Caco-2 (cell line): ENCODE measurements at regions of chr6 and their contacts with region 1.

Region 1: DNA sequence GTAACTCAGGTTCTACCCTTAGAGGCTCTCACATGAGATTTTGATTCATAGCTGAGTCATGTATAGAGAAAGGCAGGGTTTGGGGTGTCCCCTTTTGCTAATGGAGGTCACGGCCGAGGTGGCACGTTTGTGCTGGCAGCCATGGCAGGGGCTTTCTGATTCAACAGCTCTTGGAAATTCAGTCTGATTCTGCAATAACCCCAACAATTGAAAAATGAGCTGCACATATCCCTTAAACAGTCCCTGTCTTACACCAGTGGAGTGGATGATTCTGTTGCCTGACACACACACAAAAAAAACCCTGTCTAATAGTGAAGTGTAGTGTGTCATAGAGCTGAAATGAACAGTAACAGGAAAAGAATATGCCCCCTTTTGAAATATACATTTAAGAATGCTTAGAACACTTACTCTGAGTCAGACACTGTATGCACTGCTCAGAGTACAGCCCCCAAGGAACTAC is 40.4 kb upstream of the ARG1 start:
- DNase-seq: no peak
- H3K4me3 ChIP-seq: no peak overlapping the region
- H3K4me3 Mint-ChIP-seq: no peak overlapping the region
- H3K27ac Mint-ChIP-seq: no peak overlapping the region
- H3K4me1 ChIP-seq: no peaks in the 10 kb centered on the region
- H3K4me1 Mint-ChIP-seq: no peaks in the 10 kb centered on the region
- H3K27me3 ChIP-seq: no peaks in the 10 kb centered on the region
- H3K27me3 Mint-ChIP-seq: no peaks in the 10 kb centered on the region
- CTCF ChIP-seq: no peak

Region 2: DNA sequence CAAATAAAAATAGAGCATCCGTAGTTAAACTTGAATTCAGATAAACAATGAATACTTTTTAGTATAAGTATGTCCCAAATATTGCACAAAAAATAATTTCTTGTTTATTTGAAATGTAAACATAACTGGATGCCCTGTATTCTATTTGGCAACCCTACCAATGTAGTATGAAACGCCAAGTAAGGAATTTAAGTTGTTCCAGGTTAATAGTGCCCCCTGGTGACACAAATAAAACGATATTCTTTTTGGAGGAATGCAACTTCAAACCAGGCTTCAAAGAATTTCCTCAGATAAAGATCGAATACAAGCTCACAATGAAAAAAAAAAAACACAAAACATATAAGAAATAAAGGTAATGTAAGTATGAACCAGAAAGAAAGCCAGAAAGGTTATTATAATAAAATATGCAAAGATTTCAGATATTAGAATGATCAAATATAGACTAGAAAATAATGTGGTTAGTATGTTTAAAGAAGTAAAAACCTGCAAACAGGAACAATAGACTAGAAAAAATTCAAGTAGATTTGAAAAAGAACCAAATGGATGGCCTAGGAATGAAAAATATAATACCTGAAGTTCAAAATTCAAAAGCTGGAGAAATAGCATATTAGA is 415.8 kb before region 1 on chr6:
- CTCF ChIA-PET with region 1: no interaction called
- POLR2A ChIA-PET with region 1: no interaction called
- intact Hi-C with region 1: loop called (anchors 5 kb)
- DNase-seq: peak in 1 of 2 experiments; percentile 56
- H3K4me3 ChIP-seq: no peak overlapping the region
- H3K4me3 Mint-ChIP-seq: no peak overlapping the region
- H3K27ac Mint-ChIP-seq: no peak overlapping the region
- H3K4me1 ChIP-seq: peaks cover 7% of the 10 kb centered on the region
- H3K4me1 Mint-ChIP-seq: no peaks in the 10 kb centered on the region
- H3K27me3 ChIP-seq: no peaks in the 10 kb centered on the region
- H3K27me3 Mint-ChIP-seq: no peaks in the 10 kb centered on the region
- CTCF ChIP-seq: peak in 1 of 2 experiments; percentile 64

Region 3: GRCh38 chr6:131182991-131183425 is 349.6 kb before region 1 on chr6:
- CTCF ChIA-PET with region 1: interaction called, 7 read pairs
- POLR2A ChIA-PET with region 1: no interaction called
- intact Hi-C with region 1: loop called (anchors 1 kb)
- DNase-seq: peak in 1 of 2 experiments; percentile 30
- H3K4me3 ChIP-seq: no peak overlapping the region
- H3K4me3 Mint-ChIP-seq: no peak overlapping the region
- H3K27ac Mint-ChIP-seq: no peak overlapping the region
- H3K4me1 ChIP-seq: no peaks in the 10 kb centered on the region
- H3K4me1 Mint-ChIP-seq: peaks cover 13% of the 10 kb centered on the region
- H3K27me3 ChIP-seq: no peaks in the 10 kb centered on the region
- H3K27me3 Mint-ChIP-seq: no peaks in the 10 kb centered on the region
- CTCF ChIP-seq: peak; percentile 43 to 65

Region 4: GRCh38 chr6:131199568-131200272 is 332.9 kb before region 1 on chr6:
- CTCF ChIA-PET with region 1: interaction called, 9 read pairs
- POLR2A ChIA-PET with region 1: no interaction called
- intact Hi-C with region 1: loop called (anchors 1 kb)
- DNase-seq: peak; percentile 56 to 62
- H3K4me3 ChIP-seq: no peak overlapping the region
- H3K4me3 Mint-ChIP-seq: no peak overlapping the region
- H3K27ac Mint-ChIP-seq: no peak overlapping the region
- H3K4me1 ChIP-seq: no peaks in the 10 kb centered on the region
- H3K4me1 Mint-ChIP-seq: no peaks in the 10 kb centered on the region
- H3K27me3 ChIP-seq: no peaks in the 10 kb centered on the region
- H3K27me3 Mint-ChIP-seq: no peaks in the 10 kb centered on the region
- CTCF ChIP-seq: peak; percentile 72 to 80

Region 5: DNA sequence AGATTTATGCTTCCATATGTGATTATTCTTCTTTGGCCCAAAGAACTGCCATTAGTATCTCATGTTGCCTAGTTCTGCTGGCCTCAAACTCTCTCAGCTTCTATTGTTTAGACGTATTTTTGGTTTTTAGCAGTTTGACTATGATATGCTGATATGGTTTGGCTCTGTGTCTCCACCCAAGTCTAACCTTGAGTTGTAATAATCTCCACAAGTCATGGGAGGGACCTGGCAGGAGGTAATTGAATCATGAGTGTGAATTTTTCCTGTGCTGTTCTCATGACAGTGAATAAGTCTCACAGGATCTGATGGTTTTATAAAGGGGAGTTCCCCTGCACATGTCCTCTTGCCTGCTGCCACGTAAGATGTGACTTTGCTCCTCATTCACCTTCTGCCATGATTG is 56.2 kb before region 1 on chr6:
- CTCF ChIA-PET with region 1: no interaction called
- POLR2A ChIA-PET with region 1: no interaction called
- intact Hi-C with region 1: loop called (anchors 5 kb)
- DNase-seq: no peak
- H3K4me3 ChIP-seq: no peak overlapping the region
- H3K4me3 Mint-ChIP-seq: no peak overlapping the region
- H3K27ac Mint-ChIP-seq: no peak overlapping the region
- H3K4me1 ChIP-seq: peaks cover 27% of the 10 kb centered on the region
- H3K4me1 Mint-ChIP-seq: peaks cover 7% of the 10 kb centered on the region
- H3K27me3 ChIP-seq: no peaks in the 10 kb centered on the region
- H3K27me3 Mint-ChIP-seq: no peaks in the 10 kb centered on the region
- CTCF ChIP-seq: no peak